Natural killer cell (primary cell): ENCODE measurements at regions of chr17 and their contacts with region 1.

Region 1: GRCh38 chr17:60525685-60526514 is at the start of gene APPBP2:
- DNase-seq: peak; percentile 70 to 88
- ATAC-seq: peak; percentile 85 to 91 (median 86)
- H3K4me3 ChIP-seq: peak within 1 kb of the TSS; percentile 81
- H3K4me3 Mint-ChIP-seq: peak within 1 kb of the TSS; percentile 95
- H3K27ac ChIP-seq: peak within 1 kb of the TSS; percentile 91
- H3K27ac Mint-ChIP-seq: peak within 1 kb of the TSS; percentile 93 to 98
- H3K4me1 ChIP-seq: peaks cover 10% of the 10 kb centered on the region
- H3K4me1 Mint-ChIP-seq: peaks cover 38 to 45% of the 10 kb centered on the region in 2 donors
- H3K27me3 ChIP-seq: no peaks in the 10 kb centered on the region
- H3K27me3 Mint-ChIP-seq: no peaks in the 10 kb centered on the region
- CTCF ChIP-seq: no peak
- total RNA-seq, gene APPBP2: 18.2 to 23.2 (median 23.0) TPM

Region 2: GRCh38 chr17:60554351-60554788 is 28.5 kb after region 1 on chr17:
- intact Hi-C with region 1: no loop called
- DNase-seq: no peak
- ATAC-seq: no peak
- H3K4me3 ChIP-seq: no peak overlapping the region
- H3K4me3 Mint-ChIP-seq: no peak overlapping the region
- H3K27ac ChIP-seq: no peak overlapping the region
- H3K27ac Mint-ChIP-seq: no peak overlapping the region
- H3K4me1 ChIP-seq: no peaks in the 10 kb centered on the region
- H3K4me1 Mint-ChIP-seq: no peaks in the 10 kb centered on the region
- H3K27me3 ChIP-seq: no peaks in the 10 kb centered on the region
- H3K27me3 Mint-ChIP-seq: no peaks in the 10 kb centered on the region
- CTCF ChIP-seq: no peak

Region 3: DNA sequence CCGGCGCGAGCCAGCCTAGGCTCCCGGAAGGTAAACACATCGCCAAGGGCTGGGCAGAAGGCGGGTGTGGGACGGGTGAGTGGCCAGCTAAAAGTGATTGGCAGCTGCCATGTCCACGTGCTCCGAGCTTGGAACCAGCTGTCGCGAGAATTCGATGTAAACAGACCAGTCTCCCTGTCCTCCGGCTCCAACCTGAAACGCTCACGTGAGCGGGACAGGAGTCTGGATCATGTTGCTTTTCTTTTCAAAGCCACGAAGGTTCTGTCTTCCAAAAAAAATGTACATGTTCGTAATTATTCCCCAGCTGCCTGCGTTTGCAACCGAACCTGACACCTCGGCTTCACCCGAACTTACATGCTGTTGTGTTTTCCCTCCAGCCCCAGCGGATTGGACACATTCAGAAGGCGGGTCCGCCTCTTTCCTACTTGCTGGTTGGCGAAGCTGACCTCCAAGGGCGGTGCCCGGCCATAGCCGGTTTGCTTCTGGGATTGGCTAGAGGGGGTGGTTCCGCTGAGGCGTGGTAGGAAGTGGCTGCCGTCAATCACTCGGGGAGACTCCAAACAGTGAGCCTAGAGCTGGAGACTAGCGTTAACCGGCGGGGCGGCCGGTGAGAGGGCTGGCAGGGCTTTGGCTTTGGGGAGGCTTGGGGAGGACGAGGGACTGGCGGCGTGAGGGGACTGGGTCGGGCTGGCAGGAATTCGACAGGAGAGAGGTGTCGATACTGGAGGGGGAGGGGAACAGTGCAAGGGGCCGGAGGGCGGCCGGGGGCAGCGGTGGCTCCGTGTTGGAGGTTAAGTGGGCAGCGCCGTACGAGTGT is 151.6 kb after region 1 on chr17 and contains the start of gene BCAS3:
- intact Hi-C with region 1: loop called (anchors 1 kb)
- DNase-seq: peak; percentile 93 to 98
- ATAC-seq: peak; percentile 92 to 98 (median 93)
- H3K4me3 ChIP-seq: peak within 1 kb of the TSS; percentile 92
- H3K4me3 Mint-ChIP-seq: peak within 1 kb of the TSS; percentile 96
- H3K27ac ChIP-seq: peak within 1 kb of the TSS; percentile 83
- H3K27ac Mint-ChIP-seq: peak within 1 kb of the TSS; percentile 97 to 100
- H3K4me1 ChIP-seq: peaks cover 10% of the 10 kb centered on the region
- H3K4me1 Mint-ChIP-seq: peaks cover 20 to 31% of the 10 kb centered on the region in 2 donors
- H3K27me3 ChIP-seq: no peaks in the 10 kb centered on the region
- H3K27me3 Mint-ChIP-seq: no peaks in the 10 kb centered on the region
- CTCF ChIP-seq: no peak
- total RNA-seq, gene BCAS3: 60.5 to 87.8 (median 72.0) TPM